ENCODE measurements at regions of chr21 and their contacts with region 1.

Region 1: GRCh38 chr21:25881525-25882376 is 147.0 kb downstream of the GABPA start:
- DNase-seq: peak; percentile 61 to 85 (median 64)
- H3K4me3 ChIP-seq: no peak overlapping the region
- H3K27ac ChIP-seq: no peak overlapping the region
- H3K4me1 ChIP-seq: no peaks in the 10 kb centered on the region
- H3K27me3 ChIP-seq: no peaks in the 10 kb centered on the region
- CTCF ChIP-seq: peak; percentile 82 to 94 (median 91)
- POLR2A ChIP-seq: no peak

Region 2: DNA sequence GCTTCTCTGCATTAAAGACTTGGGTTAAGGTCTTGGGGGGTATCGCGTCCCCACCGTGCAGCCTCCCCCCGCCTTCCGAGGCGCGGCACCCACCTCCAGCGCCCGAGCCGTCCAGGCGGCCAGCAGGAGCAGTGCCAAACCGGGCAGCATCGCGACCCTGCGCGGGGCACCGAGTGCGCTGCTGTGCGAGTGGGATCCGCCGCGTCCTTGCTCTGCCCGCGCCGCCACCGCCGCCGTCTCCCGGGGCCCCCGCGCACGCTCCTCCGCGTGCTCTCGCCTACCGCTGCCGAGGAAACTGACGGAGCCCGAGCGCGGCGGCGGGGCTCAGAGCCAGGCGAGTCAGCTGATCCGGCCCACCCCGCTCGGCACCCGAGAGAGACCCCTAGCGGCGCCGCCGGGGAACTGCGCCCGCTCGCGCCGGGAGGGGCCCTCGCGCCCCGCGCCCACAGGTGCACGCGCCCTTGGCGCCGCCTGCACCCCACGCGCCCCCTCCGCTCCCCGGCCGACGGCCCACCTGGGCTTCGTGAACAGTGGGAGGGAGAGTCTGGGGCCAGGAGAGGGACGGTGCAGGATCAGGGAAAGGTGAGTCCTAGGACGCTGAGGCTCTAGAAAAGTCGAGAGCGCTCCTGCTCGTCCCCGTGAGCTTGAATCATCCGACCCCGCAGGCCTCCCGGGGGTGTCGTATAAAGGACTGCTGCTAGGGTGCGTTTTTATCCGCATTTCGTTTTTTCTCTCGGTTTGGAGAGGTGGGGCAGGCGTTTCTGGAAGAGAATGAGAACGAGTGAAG is 288.9 kb after region 1 on chr21 and contains the start of gene APP:
- intact Hi-C with region 1: loop called (anchors 10 kb)
- DNase-seq: peak; percentile 83 to 92 (median 87)
- H3K4me3 ChIP-seq: peak within 1 kb of the TSS; percentile 92 to 98 (median 94)
- H3K27ac ChIP-seq: peak within 1 kb of the TSS; percentile 71 to 98 (median 91)
- H3K4me1 ChIP-seq: peaks cover 14 to 42% of the 10 kb centered on the region in 2 donors
- H3K27me3 ChIP-seq: no peaks in the 10 kb centered on the region
- CTCF ChIP-seq: peak; percentile 34 to 100 (median 70)
- POLR2A ChIP-seq: peak; percentile 84 to 92
- total RNA-seq, gene APP: 479 to 1,079 (median 718) TPM